ENCODE measurements at regions of chr19 and their contacts with region 1.

Region 1: GRCh38 chr19:55258828-55259539 is at the start of gene PPP6R1:
- DNase-seq: peak; percentile 99
- ATAC-seq: peak; percentile 88
- H3K4me3 ChIP-seq: peak within 1 kb of the TSS; percentile 89 to 96
- H3K27ac ChIP-seq: peak within 1 kb of the TSS; percentile 79
- H3K4me1 ChIP-seq: peaks cover 20 to 41% of the 10 kb centered on the region in 2 experiments
- H3K27me3 ChIP-seq: no peaks in the 10 kb centered on the region
- CTCF ChIP-seq: no peak
- POLR2A ChIP-seq: peak; percentile 82
- RAD21 ChIP-seq: no peak; the same call in 1 of the 2 replicates
- total RNA-seq, gene PPP6R1: 96.7 TPM

Region 2: DNA sequence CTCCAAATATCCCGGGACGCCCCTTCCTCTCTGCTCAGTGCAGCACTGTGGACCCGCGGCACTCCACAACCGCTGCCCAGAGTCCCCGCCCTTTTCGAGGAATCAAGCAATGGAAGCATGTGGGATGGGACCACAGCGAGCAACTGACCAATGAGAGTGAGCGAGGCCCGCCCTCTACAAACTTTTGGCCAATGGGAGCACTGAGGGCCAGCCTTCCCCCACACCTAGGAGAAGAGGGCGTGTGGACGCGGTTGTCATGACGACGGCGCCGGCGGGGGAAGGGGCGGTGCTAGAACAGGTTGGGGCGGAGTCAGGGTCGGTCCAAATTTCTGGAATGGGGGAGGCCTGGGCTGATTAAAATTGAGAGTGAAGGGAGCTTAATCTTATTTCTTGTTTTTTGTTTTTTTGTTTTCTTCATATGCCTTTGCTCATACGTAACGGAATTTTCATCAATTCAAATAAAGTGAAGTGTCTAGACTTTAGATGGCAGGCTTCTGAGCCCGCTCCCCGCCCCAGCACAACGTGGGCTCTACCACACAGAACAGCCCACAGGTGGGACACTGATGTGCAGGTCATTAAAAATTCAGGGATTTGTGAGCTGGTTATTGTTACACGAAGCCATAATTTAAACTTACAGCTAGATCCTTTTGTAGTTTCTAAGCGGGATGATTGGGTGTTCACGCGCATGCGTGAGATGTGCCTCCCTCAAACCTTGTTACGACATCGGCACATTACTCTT is 92.3 kb before region 1 on chr19 and contains the start of gene DNAAF3:
- CTCF ChIA-PET with region 1: interaction called, 3 read pairs
- POLR2A ChIA-PET with region 1: interaction called, 4 read pairs
- RAD21 ChIA-PET with region 1: no interaction called
- intact Hi-C with region 1: loop called (anchors 5 kb)
- DNase-seq: peak; percentile 97
- ATAC-seq: peak; percentile 94
- H3K4me3 ChIP-seq: peak within 1 kb of the TSS; percentile 72 to 74
- H3K27ac ChIP-seq: peak within 1 kb of the TSS; percentile 66
- H3K4me1 ChIP-seq: peaks cover 6 to 24% of the 10 kb centered on the region in 2 experiments; a peak in 3 of 4 replicates
- H3K27me3 ChIP-seq: no peaks in the 10 kb centered on the region
- CTCF ChIP-seq: no peak
- POLR2A ChIP-seq: peak; percentile 44
- RAD21 ChIP-seq: no peak
- total RNA-seq, gene DNAAF3: 52.8 TPM

Region 3: DNA sequence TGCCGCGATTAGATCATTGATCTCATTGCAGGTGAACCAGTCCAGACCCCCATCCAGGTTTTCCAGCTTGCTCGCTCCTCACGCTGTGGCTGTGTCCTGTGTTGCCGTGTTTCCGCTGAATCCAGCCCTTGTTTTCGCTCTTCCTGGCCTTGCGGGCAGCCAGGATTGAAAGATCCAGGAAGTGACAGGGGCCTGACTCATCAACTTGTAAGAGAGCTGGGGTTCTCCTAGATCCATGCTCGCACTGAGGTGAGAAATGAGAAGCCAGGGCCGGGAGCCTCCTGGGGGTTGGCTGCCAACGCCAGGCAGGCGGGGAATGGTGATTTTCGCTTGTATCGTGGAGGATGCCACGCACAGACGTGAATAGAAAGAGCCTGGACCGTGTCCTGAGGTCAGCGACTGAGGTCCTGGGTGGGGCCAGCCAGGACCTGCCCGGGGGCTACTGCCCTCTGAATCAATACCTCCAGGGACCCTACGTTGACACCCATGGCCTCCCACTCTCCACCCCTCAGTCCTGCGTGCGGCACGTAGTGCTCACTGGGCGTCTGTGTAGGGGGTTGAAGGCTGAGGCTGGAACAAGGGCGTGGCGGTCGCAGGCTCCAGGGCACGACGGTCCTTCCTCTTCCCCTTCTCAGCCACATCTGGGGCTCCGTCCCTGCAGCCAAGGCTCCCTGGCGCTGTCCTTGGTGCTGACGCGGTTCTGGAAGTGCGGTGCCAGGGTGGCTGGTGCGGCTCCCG is 42.4 kb before region 1 on chr19:
- CTCF ChIA-PET with region 1: interaction called, 3 read pairs
- POLR2A ChIA-PET with region 1: interaction called, 45 read pairs
- RAD21 ChIA-PET with region 1: interaction called, 3 to 8 read pairs
- intact Hi-C with region 1: loop called (anchors 1 kb)
- DNase-seq: peak; percentile 100
- ATAC-seq: peak; percentile 83
- H3K4me3 ChIP-seq: peak overlapping the region; percentile 56 to 67
- H3K27ac ChIP-seq: peak overlapping the region; percentile 87
- H3K4me1 ChIP-seq: peaks cover 11 to 39% of the 10 kb centered on the region in 2 experiments
- H3K27me3 ChIP-seq: no peaks in the 10 kb centered on the region
- CTCF ChIP-seq: no peak
- POLR2A ChIP-seq: peak; percentile 23
- RAD21 ChIP-seq: peak; percentile 36; the same call in 1 of the 2 replicates

Region 4: GRCh38 chr19:55279770-55280643 is 21.0 kb after region 1 on chr19 and contains the start of gene HSPBP1:
- CTCF ChIA-PET with region 1: no interaction called
- POLR2A ChIA-PET with region 1: interaction called, 26 read pairs
- RAD21 ChIA-PET with region 1: no interaction called
- intact Hi-C with region 1: no loop called
- DNase-seq: peak; percentile 98
- ATAC-seq: peak; percentile 94
- H3K4me3 ChIP-seq: peak within 1 kb of the TSS; percentile 97 to 99
- H3K27ac ChIP-seq: peak within 1 kb of the TSS; percentile 68
- H3K4me1 ChIP-seq: peaks cover 19 to 35% of the 10 kb centered on the region in 2 experiments
- H3K27me3 ChIP-seq: no peaks in the 10 kb centered on the region
- CTCF ChIP-seq: no peak
- POLR2A ChIP-seq: no peak
- RAD21 ChIP-seq: no peak
- total RNA-seq, gene HSPBP1: 63.0 TPM

Region 5: GRCh38 chr19:55301459-55302317 is 42.7 kb after region 1 on chr19:
- CTCF ChIA-PET with region 1: no interaction called
- POLR2A ChIA-PET with region 1: no interaction called
- RAD21 ChIA-PET with region 1: no interaction called
- intact Hi-C with region 1: no loop called
- DNase-seq: peak; percentile 54
- ATAC-seq: peak; percentile 83
- H3K4me3 ChIP-seq: no peak overlapping the region
- H3K27ac ChIP-seq: no peak overlapping the region
- H3K4me1 ChIP-seq: peaks cover 0 to 7% of the 10 kb centered on the region in 2 experiments; a peak in 1 of 4 replicates
- H3K27me3 ChIP-seq: no peaks in the 10 kb centered on the region
- CTCF ChIP-seq: peak; percentile 54 to 92 (median 83); a peak in 5 of 6 replicates
- POLR2A ChIP-seq: no peak
- RAD21 ChIP-seq: peak; percentile 75

Region 6: DNA sequence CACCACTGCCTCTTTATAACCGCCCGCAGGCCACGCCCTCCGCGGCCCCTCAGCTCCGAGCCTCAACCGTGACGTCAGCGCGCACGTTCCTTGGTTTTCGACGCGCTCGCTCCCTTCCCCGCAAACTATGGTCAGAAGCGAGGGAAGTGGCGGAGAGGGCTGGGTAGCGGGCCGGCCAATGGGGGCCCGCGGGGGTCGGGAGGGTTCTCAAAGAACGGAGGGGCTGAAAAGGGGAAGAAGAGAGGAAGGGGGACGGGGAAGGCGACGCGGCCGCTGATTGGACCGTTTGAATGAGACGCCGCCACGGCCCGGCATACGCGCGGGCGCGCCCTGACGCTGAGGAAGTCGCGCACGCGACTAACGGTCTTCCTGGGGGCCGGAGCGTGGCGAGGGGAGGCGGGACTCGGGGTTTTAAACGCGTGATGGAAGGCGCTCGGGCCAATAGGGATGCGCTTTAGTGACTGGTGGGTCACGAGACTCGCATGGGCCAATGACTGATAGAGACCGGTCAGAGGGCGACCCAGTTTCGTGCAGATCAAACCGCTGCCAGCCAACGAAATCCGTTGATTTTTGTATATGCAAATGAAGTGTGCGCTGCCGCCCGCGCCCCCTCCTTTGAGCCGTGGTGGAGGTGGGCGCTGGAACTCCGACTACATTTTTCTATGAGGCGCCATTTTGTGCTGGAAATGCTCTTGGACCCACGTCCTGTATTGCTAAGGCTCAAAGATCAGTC is 149.0 kb after region 1 on chr19:
- CTCF ChIA-PET with region 1: no interaction called
- POLR2A ChIA-PET with region 1: interaction called, 10 read pairs
- RAD21 ChIA-PET with region 1: no interaction called
- intact Hi-C with region 1: no loop called
- DNase-seq: peak; percentile 98
- ATAC-seq: peak; percentile 94
- H3K4me3 ChIP-seq: peak overlapping the region; percentile 81 to 93
- H3K27ac ChIP-seq: peak overlapping the region; percentile 95
- H3K4me1 ChIP-seq: peaks cover 12 to 27% of the 10 kb centered on the region in 2 experiments
- H3K27me3 ChIP-seq: no peaks in the 10 kb centered on the region
- CTCF ChIP-seq: no peak
- POLR2A ChIP-seq: no peak
- RAD21 ChIP-seq: no peak

Measured in HCT116 (cell line).